AG04450 (cell line): ENCODE measurements at regions of chr2 and their contacts with region 1.

Region 1: DNA sequence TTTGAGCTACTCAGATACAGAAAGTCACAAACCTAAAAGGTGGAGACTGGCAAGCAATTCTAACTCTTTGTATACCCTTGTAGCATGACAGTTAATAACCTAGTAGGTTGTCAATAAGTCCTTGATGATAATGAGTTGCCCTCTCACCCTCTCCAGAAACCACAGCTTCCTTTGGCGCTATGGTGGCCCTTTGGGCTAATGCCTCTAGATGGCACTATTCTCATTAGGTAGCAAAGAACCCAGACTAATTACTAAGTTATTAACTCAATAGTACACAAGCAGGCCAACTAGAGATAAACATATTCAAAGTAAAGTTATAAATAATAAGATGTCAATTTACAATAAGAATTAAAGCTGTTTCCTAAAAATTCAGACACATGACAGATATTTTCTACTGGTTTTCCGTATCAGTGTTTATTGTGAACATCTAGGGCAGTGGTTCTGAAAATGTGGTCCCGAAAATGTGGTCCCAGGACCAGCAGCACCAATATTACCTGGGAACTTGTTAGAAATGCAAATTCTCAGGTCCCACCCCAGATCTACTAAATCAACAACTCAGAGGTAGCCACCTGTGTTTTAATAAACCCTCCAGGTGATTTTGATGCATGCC is 41.1 kb downstream of the LDAH start:
- DNase-seq: no peak
- H3K4me3 ChIP-seq: no peak overlapping the region
- H3K27ac ChIP-seq: no peak overlapping the region
- H3K27me3 ChIP-seq: no peaks in the 10 kb centered on the region
- CTCF ChIP-seq: peak; percentile 61

Region 2: GRCh38 chr2:19911799-19912509 is 869.8 kb before region 1 on chr2:
- CTCF ChIA-PET with region 1: no interaction called
- POLR2A ChIA-PET with region 1: no interaction called
- DNase-seq: peak; percentile 33
- H3K4me3 ChIP-seq: no peak overlapping the region
- H3K27ac ChIP-seq: no peak overlapping the region
- H3K27me3 ChIP-seq: no peaks in the 10 kb centered on the region
- CTCF ChIP-seq: no peak

Region 3: GRCh38 chr2:20747317-20747716 is 34.4 kb before region 1 on chr2:
- CTCF ChIA-PET with region 1: interaction called, 11 read pairs
- POLR2A ChIA-PET with region 1: no interaction called
- DNase-seq: no peak
- H3K4me3 ChIP-seq: no peak overlapping the region
- H3K27ac ChIP-seq: no peak overlapping the region
- H3K27me3 ChIP-seq: no peaks in the 10 kb centered on the region
- CTCF ChIP-seq: no peak

Region 4: GRCh38 chr2:20758997-20759396 is 22.8 kb before region 1 on chr2:
- CTCF ChIA-PET with region 1: interaction called, 16 read pairs
- POLR2A ChIA-PET with region 1: no interaction called
- DNase-seq: no peak
- H3K4me3 ChIP-seq: no peak overlapping the region
- H3K27ac ChIP-seq: no peak overlapping the region
- H3K27me3 ChIP-seq: no peaks in the 10 kb centered on the region
- CTCF ChIP-seq: no peak

Region 5: GRCh38 chr2:20771299-20771698 is 10.5 kb before region 1 on chr2:
- CTCF ChIA-PET with region 1: interaction called, 37 read pairs
- POLR2A ChIA-PET with region 1: no interaction called
- DNase-seq: no peak
- H3K4me3 ChIP-seq: no peak overlapping the region
- H3K27ac ChIP-seq: no peak overlapping the region
- H3K27me3 ChIP-seq: no peaks in the 10 kb centered on the region
- CTCF ChIP-seq: no peak

Region 6: GRCh38 chr2:20796374-20796791 is 14.6 kb after region 1 on chr2:
- CTCF ChIA-PET with region 1: interaction called, 39 read pairs
- POLR2A ChIA-PET with region 1: no interaction called
- DNase-seq: no peak
- H3K4me3 ChIP-seq: no peak overlapping the region
- H3K27ac ChIP-seq: no peak overlapping the region
- H3K27me3 ChIP-seq: no peaks in the 10 kb centered on the region
- CTCF ChIP-seq: no peak

Region 7: GRCh38 chr2:20815216-20815615 is 33.5 kb after region 1 on chr2:
- CTCF ChIA-PET with region 1: interaction called, 11 read pairs
- POLR2A ChIA-PET with region 1: no interaction called
- DNase-seq: no peak
- H3K4me3 ChIP-seq: no peak overlapping the region
- H3K27ac ChIP-seq: no peak overlapping the region
- H3K27me3 ChIP-seq: no peaks in the 10 kb centered on the region
- CTCF ChIP-seq: no peak

Region 8: GRCh38 chr2:20962939-20963557 is 181.3 kb after region 1 on chr2:
- CTCF ChIA-PET with region 1: interaction called, 38 read pairs
- POLR2A ChIA-PET with region 1: no interaction called
- DNase-seq: peak; percentile 3
- H3K4me3 ChIP-seq: no peak overlapping the region
- H3K27ac ChIP-seq: no peak overlapping the region
- H3K27me3 ChIP-seq: peaks cover 9% of the 10 kb centered on the region
- CTCF ChIP-seq: peak; percentile 89